Dorsolateral prefrontal cortex (tissue), 120 donors: ENCODE measurements at regions of chr1 and their contacts with region 1.

Region 1: GRCh38 chr1:169794530-169795416 is at the start of gene METTL18:
- DNase-seq: peak; percentile 82 to 95 (median 93)
- H3K4me3 ChIP-seq: peak within 1 kb of the TSS; percentile 49 to 100 (median 78)
- H3K27ac ChIP-seq: peak within 1 kb of the TSS; percentile 57 to 97 (median 91)
- H3K27me3 ChIP-seq: no peaks in the 10 kb centered on the region
- CTCF ChIP-seq: peak in 46 of 56 donors; percentile 8 to 78 (median 42)
- total RNA-seq, gene METTL18: 2.6 to 8.9 (median 5.6) TPM

Region 2: GRCh38 chr1:169367486-169368405 is 427.0 kb before region 1 on chr1 and contains the starts of genes BLZF1 and NME7:
- intact Hi-C with region 1: loop called in 1 of 2 experiments (anchors 10 kb)
- DNase-seq: peak; percentile 90 to 99 (median 97)
- H3K4me3 ChIP-seq: peak within 1 kb of the TSS; percentile 62 to 98 (median 80)
- H3K27ac ChIP-seq: peak within 1 kb of the TSS in 56 of 59 donors; percentile 27 to 96 (median 84)
- H3K27me3 ChIP-seq: no peaks in the 10 kb centered on the region
- CTCF ChIP-seq: peak in 13 of 56 donors; percentile 4 to 42 (median 24)
- total RNA-seq, gene BLZF1: 20.9 to 36.7 (median 29.5) TPM
- total RNA-seq, gene NME7: 15.3 to 50.1 (median 28.3) TPM